ENCODE measurements at regions of chr6 and their contacts with region 1.

Region 1: GRCh38 chr6:47097092-47097945 is 55.2 kb upstream of the ADGRF1 start:
- DNase-seq: peak; percentile 73
- ATAC-seq: peak; percentile 95
- H3K4me3 ChIP-seq: no peak overlapping the region
- H3K27ac ChIP-seq: peak overlapping the region; percentile 82
- H3K4me1 ChIP-seq: peaks cover 36% of the 10 kb centered on the region
- H3K27me3 ChIP-seq: no peaks in the 10 kb centered on the region
- CTCF ChIP-seq: peak; percentile 81

Region 2: DNA sequence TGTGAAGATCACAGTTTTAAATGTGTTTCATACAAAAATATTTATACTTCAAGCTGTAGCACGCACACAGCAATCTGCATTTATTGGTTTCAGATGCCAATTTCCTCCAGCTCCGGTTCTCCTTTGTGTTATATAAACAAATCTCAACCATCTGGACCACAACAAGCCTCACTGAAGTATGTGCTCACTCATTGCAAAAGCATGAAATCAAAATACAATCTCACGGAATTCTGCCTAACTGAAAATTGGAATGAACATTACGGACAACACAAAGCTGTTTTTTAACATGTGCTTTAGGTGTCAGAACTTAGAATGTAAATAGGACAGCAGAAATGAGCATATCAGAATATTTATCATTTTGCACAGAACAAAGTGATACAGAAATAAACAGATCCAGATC is 644.1 kb before region 1 on chr6:
- CTCF ChIA-PET with region 1: no interaction called
- POLR2A ChIA-PET with region 1: no interaction called
- in situ Hi-C with region 1: no loop called
- intact Hi-C with region 1: no loop called
- DNase-seq: no peak
- ATAC-seq: no peak
- H3K4me3 ChIP-seq: no peak overlapping the region
- H3K27ac ChIP-seq: no peak overlapping the region
- H3K4me1 ChIP-seq: no peaks in the 10 kb centered on the region
- H3K27me3 ChIP-seq: no peaks in the 10 kb centered on the region
- CTCF ChIP-seq: no peak

Region 3: DNA sequence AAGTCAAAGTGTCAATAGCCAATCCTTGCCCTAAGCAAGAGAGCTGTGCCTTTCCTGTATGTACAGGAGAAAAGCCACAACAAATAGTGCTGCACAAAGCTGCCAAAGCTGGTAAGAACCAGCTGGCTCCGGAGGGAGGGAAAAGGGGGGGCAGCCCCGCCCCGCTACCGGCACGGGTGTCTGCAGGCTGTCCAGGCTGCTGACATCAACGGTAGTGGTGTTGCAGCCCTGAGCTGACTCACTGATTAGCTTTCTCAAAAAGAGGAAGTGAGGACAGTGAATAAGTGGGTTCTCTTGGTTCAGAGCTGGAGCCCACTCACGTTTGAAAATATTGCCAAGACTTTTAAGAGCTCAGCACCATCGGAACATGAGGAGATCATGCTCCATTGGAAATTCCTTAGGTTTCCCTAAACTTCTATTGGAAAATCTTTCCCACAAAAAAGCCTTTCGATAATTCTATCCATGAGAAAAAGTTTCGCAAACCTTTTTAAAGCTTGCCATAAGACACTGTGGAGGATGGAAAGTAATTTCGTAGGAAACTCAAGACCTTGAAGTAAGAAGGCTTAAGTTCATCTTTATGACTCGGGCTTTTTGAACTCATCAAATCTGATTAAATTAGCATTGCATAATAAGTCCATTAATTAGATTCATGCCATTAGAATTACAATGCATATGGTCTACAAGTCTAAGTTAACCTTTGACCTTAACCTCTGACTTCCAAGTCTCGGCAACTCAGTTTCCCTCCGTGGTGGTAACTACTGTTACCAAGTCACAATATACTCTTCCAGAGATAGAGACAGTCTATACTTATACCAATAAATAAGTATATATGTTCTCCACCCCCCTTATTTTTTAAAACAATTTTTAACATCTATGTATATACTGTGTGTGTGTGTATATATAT is 145.4 kb after region 1 on chr6:
- CTCF ChIA-PET with region 1: no interaction called
- POLR2A ChIA-PET with region 1: interaction called, 4 read pairs
- in situ Hi-C with region 1: no loop called
- intact Hi-C with region 1: loop called (anchors 5 kb)
- DNase-seq: peak; percentile 27
- ATAC-seq: peak; percentile 87
- H3K4me3 ChIP-seq: peak overlapping the region in 1 of 2 experiments; percentile 28; a peak in 2 of 4 replicates
- H3K27ac ChIP-seq: peak overlapping the region; percentile 65
- H3K4me1 ChIP-seq: peaks cover 28% of the 10 kb centered on the region
- H3K27me3 ChIP-seq: no peaks in the 10 kb centered on the region
- CTCF ChIP-seq: no peak

Region 4: GRCh38 chr6:47309291-47310130 is 212.2 kb after region 1 on chr6 and contains the start of gene TNFRSF21:
- CTCF ChIA-PET with region 1: interaction called, 7 read pairs
- POLR2A ChIA-PET with region 1: interaction called, 4 read pairs
- in situ Hi-C with region 1: no loop called
- intact Hi-C with region 1: loop called (anchors 2 kb)
- DNase-seq: peak; percentile 81
- ATAC-seq: peak; percentile 99
- H3K4me3 ChIP-seq: peak within 1 kb of the TSS; percentile 67 to 88
- H3K27ac ChIP-seq: peak within 1 kb of the TSS; percentile 71
- H3K4me1 ChIP-seq: peaks cover 27% of the 10 kb centered on the region
- H3K27me3 ChIP-seq: no peaks in the 10 kb centered on the region
- CTCF ChIP-seq: peak; percentile 97
- total RNA-seq, gene TNFRSF21: 76.0 TPM

Measured in Panc1 (cell line).